Activated B cell treated with CpG ODN at 0.5 μM for 24 hours (primary cell): ENCODE measurements at regions of chr18 and their contacts with region 1.

Region 1: GRCh38 chr18:50099725-50100407 is 95.1 kb downstream of the MYO5B start:
- DNase-seq: no peak
- ATAC-seq: no peak
- H3K4me3 Mint-ChIP-seq: no peak overlapping the region
- H3K27ac Mint-ChIP-seq: no peak overlapping the region
- H3K4me1 Mint-ChIP-seq: no peaks in the 10 kb centered on the region
- H3K27me3 Mint-ChIP-seq: peaks cover 27% of the 10 kb centered on the region
- CTCF ChIP-seq: no peak

Region 2: GRCh38 chr18:50061876-50062517 is 37.9 kb before region 1 on chr18:
- CTCF ChIA-PET with region 1: no interaction called
- POLR2A ChIA-PET with region 1: interaction called, 13 read pairs
- intact Hi-C with region 1: no loop called
- DNase-seq: no peak
- ATAC-seq: no peak
- H3K4me3 Mint-ChIP-seq: no peak overlapping the region
- H3K27ac Mint-ChIP-seq: no peak overlapping the region
- H3K4me1 Mint-ChIP-seq: no peaks in the 10 kb centered on the region
- H3K27me3 Mint-ChIP-seq: peaks cover 26% of the 10 kb centered on the region
- CTCF ChIP-seq: no peak

Region 3: DNA sequence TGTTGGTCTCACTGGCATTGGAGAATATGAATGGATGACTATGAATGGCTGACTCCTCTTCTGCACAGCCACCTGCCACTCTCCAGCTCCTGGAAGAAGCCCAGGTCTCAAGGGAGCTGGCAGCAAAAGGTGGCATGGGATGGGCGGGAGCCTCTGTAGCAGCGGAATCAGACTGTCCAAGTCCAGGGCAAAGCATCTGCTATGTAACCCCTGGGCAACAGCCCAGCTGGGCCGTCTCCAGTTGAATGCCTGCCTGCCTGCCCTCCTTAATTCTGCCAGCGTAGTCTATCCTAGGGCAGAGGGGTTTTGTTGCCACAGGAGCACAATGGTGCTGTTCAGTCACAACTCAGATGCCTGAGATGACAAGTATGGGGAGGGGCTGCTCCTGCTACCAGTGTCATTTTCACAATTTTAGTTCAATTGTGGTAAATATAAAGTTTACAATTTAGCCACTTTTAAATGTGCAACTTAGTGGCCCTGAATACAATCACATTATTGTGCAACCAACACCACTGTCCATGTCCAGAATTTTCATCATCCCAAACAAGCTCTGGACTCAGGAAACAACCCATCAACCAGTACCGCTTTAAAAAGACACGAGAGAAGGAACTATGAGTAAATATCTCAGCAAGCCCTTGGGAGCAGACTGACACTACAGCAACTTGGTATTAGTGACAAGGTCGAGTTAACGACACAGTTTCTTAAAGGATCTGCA is 20.1 kb before region 1 on chr18:
- CTCF ChIA-PET with region 1: no interaction called
- POLR2A ChIA-PET with region 1: no interaction called
- intact Hi-C with region 1: no loop called
- DNase-seq: no peak
- ATAC-seq: no peak
- H3K4me3 Mint-ChIP-seq: no peak overlapping the region
- H3K27ac Mint-ChIP-seq: no peak overlapping the region
- H3K4me1 Mint-ChIP-seq: peaks cover 16% of the 10 kb centered on the region
- H3K27me3 Mint-ChIP-seq: peaks cover 8% of the 10 kb centered on the region
- CTCF ChIP-seq: no peak

Region 4: GRCh38 chr18:50158923-50159653 is 59.2 kb after region 1 on chr18:
- CTCF ChIA-PET with region 1: no interaction called
- POLR2A ChIA-PET with region 1: no interaction called
- intact Hi-C with region 1: loop called (anchors 10 kb)
- DNase-seq: no peak
- ATAC-seq: no peak
- H3K4me3 Mint-ChIP-seq: no peak overlapping the region
- H3K27ac Mint-ChIP-seq: no peak overlapping the region
- H3K4me1 Mint-ChIP-seq: no peaks in the 10 kb centered on the region
- H3K27me3 Mint-ChIP-seq: peaks cover 31% of the 10 kb centered on the region
- CTCF ChIP-seq: no peak

Region 5: DNA sequence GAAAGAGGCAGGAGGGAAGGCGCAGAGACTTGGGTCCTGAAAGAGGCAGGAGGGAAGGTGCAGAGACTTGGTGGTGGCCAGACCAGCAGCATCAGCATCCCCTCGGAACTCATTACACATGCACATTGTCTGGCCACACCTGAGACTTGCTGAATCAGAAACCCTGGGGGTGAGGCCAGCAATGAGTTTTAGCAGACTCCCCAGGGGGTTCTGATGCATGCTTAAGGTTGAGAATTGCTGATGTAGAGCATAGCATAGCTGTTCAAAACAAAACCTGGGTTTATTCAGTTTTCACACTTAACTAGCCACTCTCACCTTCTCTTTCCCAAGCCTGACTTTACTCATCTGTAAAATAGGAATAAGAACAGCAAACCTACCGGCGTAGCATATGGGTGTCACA is 597.1 kb after region 1 on chr18:
- CTCF ChIA-PET with region 1: no interaction called
- POLR2A ChIA-PET with region 1: no interaction called
- intact Hi-C with region 1: no loop called
- DNase-seq: no peak
- ATAC-seq: no peak
- H3K4me3 Mint-ChIP-seq: no peak overlapping the region
- H3K27ac Mint-ChIP-seq: no peak overlapping the region
- H3K4me1 Mint-ChIP-seq: peaks cover 13% of the 10 kb centered on the region
- H3K27me3 Mint-ChIP-seq: no peaks in the 10 kb centered on the region
- CTCF ChIP-seq: no peak